ENCODE measurements at regions of chr9 and their contacts with region 1.

Region 1: DNA sequence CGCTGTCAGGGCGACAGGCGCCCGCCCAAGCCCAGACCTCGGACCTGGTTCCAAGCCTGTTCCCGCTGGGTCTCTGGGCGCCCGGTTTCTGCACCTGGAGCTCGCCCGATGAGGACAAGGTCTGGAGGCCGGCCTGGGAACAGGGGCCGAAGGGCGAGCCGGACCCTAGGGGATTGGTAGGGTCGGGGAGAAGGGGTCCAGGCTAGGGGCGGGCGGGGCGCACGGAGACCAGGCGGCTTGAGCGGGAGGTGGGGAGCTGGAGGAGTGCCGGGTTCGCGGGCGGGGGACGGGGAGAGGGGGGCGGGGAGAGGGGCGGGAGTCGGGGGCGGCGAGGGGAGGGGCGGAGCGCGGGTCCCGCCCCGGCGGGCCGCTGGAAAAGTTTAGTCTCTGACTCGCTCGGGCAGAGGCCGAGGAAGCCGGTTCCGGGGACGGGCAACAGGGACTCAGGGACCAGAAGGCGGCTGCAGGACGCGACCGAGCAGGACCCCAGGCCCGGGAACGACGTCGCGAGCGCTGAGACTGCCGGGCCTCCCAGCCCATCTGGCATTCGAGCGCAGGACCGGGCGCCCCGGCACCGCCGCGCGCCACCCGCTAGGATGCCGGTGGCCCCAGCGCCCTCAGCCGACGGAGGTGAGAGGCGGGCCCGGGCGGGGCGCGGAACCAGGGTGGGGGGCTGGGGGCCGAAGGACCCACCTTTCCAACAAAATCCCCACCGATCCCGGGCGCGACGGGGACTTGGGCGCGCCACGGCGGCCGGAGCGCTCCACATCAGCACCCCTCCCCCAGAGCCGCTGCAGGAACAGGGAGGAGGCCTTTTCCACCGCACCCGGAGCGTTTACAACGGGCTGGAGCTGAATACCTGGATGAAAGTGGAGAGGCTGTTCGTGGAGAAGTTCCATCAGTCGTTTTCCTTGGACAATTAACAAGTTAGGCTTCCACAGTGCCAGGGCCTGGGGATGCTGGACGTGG is at the start of gene S1PR3:
- DNase-seq: peak in 1 of 2 donors; percentile 90
- H3K4me3 ChIP-seq: peak within 1 kb of the TSS; percentile 61 to 71
- H3K27ac ChIP-seq: peak within 1 kb of the TSS; percentile 92
- H3K4me1 ChIP-seq: peaks cover 66% of the 10 kb centered on the region
- H3K27me3 ChIP-seq: no peaks in the 10 kb centered on the region
- CTCF ChIP-seq: no peak
- POLR2A ChIP-seq: peak in 1 of 2 donors; percentile 77
- total RNA-seq, gene S1PR3: 39.3 TPM

Region 2: DNA sequence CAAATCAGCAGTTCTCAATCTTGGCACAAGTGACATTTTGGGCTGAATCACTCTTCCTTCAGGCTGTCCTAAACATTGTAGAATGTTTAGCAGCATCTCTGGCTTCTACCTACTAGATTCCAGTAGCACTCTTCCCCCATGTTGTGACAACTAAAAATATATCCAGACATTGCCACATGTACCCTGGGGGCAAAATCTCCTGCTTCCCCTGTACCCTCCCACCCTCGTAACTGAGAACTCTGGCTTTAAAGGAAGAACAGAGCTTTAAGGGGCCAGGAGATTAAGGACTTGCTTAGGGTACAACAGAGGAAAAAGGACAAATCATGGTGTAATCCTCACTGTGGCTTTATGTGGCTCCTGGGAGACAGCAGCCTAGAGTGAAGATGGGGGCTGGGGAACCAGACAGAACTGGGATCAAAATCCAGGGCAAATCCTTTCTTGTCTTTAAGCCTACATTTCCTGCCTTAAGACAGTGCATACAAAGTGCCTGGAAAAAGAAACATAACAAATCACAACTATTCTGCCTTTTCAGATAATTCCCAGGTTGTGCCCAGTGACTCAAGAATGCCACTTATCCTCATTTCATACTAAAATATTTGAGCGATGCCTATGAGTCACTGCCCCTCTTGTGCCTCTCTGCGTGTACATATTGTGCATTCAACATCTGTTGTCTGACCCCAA is 1384.4 kb before region 1 on chr9:
- intact Hi-C with region 1: no loop called
- DNase-seq: no peak
- H3K4me3 ChIP-seq: no peak overlapping the region
- H3K27ac ChIP-seq: no peak overlapping the region
- H3K4me1 ChIP-seq: no peaks in the 10 kb centered on the region
- H3K27me3 ChIP-seq: no peaks in the 10 kb centered on the region
- CTCF ChIP-seq: no peak
- POLR2A ChIP-seq: no peak

Region 3: GRCh38 chr9:88747768-88748167 is 243.6 kb before region 1 on chr9:
- intact Hi-C with region 1: loop called (anchors 10 kb)
- DNase-seq: no peak
- H3K4me3 ChIP-seq: no peak overlapping the region
- H3K27ac ChIP-seq: peak overlapping the region; percentile 46
- H3K4me1 ChIP-seq: peaks cover 48% of the 10 kb centered on the region
- H3K27me3 ChIP-seq: no peaks in the 10 kb centered on the region
- CTCF ChIP-seq: no peak
- POLR2A ChIP-seq: no peak